Colonic mucosa (tissue), 4 donors: ENCODE measurements at regions of chr16 and their contacts with region 1.

Region 1: GRCh38 chr16:16127469-16128116 is 95.7 kb downstream of the ABCC6 start:
- DNase-seq: peak; percentile 66
- H3K4me3 ChIP-seq: no peak overlapping the region
- H3K27ac ChIP-seq: no peak overlapping the region
- H3K4me1 ChIP-seq: no peaks in the 10 kb centered on the region
- H3K27me3 ChIP-seq: no peaks in the 10 kb centered on the region
- CTCF ChIP-seq: peak; percentile 85

Region 2: GRCh38 chr16:15874745-15875314 is 252.8 kb before region 1 on chr16:
- intact Hi-C with region 1: loop called (anchors 5 kb)
- DNase-seq: peak; percentile 62
- H3K4me3 ChIP-seq: no peak overlapping the region
- H3K27ac ChIP-seq: no peak overlapping the region
- H3K4me1 ChIP-seq: no peaks in the 10 kb centered on the region
- H3K27me3 ChIP-seq: no peaks in the 10 kb centered on the region
- CTCF ChIP-seq: peak; percentile 58

Region 3: GRCh38 chr16:16048904-16049582 is 78.5 kb before region 1 on chr16:
- intact Hi-C with region 1: no loop called
- DNase-seq: no peak
- H3K4me3 ChIP-seq: no peak overlapping the region
- H3K27ac ChIP-seq: no peak overlapping the region
- H3K4me1 ChIP-seq: no peaks in the 10 kb centered on the region
- H3K27me3 ChIP-seq: no peaks in the 10 kb centered on the region
- CTCF ChIP-seq: no peak